ENCODE measurements at regions of chr11 and their contacts with region 1.

Region 1: GRCh38 chr11:58579192-58580129 is 598 bp downstream of the ZFP91 start:
- DNase-seq: peak; percentile 96
- ATAC-seq: peak; percentile 33
- H3K4me3 Mint-ChIP-seq: peak overlapping the region; percentile 89
- H3K27ac Mint-ChIP-seq: peak overlapping the region; percentile 99
- H3K4me1 Mint-ChIP-seq: peaks cover 44% of the 10 kb centered on the region
- H3K27me3 Mint-ChIP-seq: no peaks in the 10 kb centered on the region

Region 2: GRCh38 chr11:57335343-57336110 is 1243.9 kb before region 1 on chr11 and contains the start of gene SSRP1:
- CTCF ChIA-PET with region 1: no interaction called
- POLR2A ChIA-PET with region 1: no interaction called
- intact Hi-C with region 1: loop called in 1 of 2 experiments (anchors 10 kb)
- DNase-seq: peak; percentile 93
- ATAC-seq: peak; percentile 99
- H3K4me3 Mint-ChIP-seq: peak within 1 kb of the TSS; percentile 97
- H3K27ac Mint-ChIP-seq: peak within 1 kb of the TSS; percentile 100
- H3K4me1 Mint-ChIP-seq: peaks cover 43% of the 10 kb centered on the region
- H3K27me3 Mint-ChIP-seq: no peaks in the 10 kb centered on the region
- total RNA-seq, gene SSRP1: 279 to 296 TPM

Region 3: GRCh38 chr11:57657194-57658022 is 922.1 kb before region 1 on chr11 and contains the start of gene CLP1:
- CTCF ChIA-PET with region 1: no interaction called
- POLR2A ChIA-PET with region 1: no interaction called
- intact Hi-C with region 1: loop called (anchors 1 to 2 kb)
- DNase-seq: peak; percentile 100
- ATAC-seq: peak; percentile 98
- H3K4me3 Mint-ChIP-seq: peak within 1 kb of the TSS; percentile 83
- H3K27ac Mint-ChIP-seq: peak within 1 kb of the TSS; percentile 95
- H3K4me1 Mint-ChIP-seq: peaks cover 29% of the 10 kb centered on the region
- H3K27me3 Mint-ChIP-seq: no peaks in the 10 kb centered on the region
- total RNA-seq, gene CLP1: 11.9 to 15.9 TPM

Region 4: GRCh38 chr11:58524232-58525036 is 55.0 kb before region 1 on chr11:
- CTCF ChIA-PET with region 1: interaction called, 45 read pairs
- POLR2A ChIA-PET with region 1: interaction called, 4 read pairs
- intact Hi-C with region 1: loop called in 1 of 2 experiments (anchors 1 kb)
- DNase-seq: peak; percentile 69
- ATAC-seq: peak; percentile 69
- H3K4me3 Mint-ChIP-seq: peak overlapping the region; percentile 47
- H3K27ac Mint-ChIP-seq: peak overlapping the region; percentile 90
- H3K4me1 Mint-ChIP-seq: peaks cover 58% of the 10 kb centered on the region
- H3K27me3 Mint-ChIP-seq: no peaks in the 10 kb centered on the region

Region 5: GRCh38 chr11:58629857-58630256 is 50.4 kb after region 1 on chr11:
- CTCF ChIA-PET with region 1: interaction called, 32 read pairs
- POLR2A ChIA-PET with region 1: no interaction called
- intact Hi-C with region 1: loop called (anchors 2 kb)
- DNase-seq: peak; percentile 38
- ATAC-seq: no peak
- H3K4me3 Mint-ChIP-seq: no peak overlapping the region
- H3K27ac Mint-ChIP-seq: no peak overlapping the region
- H3K4me1 Mint-ChIP-seq: peaks cover 9% of the 10 kb centered on the region
- H3K27me3 Mint-ChIP-seq: no peaks in the 10 kb centered on the region

Region 6: DNA sequence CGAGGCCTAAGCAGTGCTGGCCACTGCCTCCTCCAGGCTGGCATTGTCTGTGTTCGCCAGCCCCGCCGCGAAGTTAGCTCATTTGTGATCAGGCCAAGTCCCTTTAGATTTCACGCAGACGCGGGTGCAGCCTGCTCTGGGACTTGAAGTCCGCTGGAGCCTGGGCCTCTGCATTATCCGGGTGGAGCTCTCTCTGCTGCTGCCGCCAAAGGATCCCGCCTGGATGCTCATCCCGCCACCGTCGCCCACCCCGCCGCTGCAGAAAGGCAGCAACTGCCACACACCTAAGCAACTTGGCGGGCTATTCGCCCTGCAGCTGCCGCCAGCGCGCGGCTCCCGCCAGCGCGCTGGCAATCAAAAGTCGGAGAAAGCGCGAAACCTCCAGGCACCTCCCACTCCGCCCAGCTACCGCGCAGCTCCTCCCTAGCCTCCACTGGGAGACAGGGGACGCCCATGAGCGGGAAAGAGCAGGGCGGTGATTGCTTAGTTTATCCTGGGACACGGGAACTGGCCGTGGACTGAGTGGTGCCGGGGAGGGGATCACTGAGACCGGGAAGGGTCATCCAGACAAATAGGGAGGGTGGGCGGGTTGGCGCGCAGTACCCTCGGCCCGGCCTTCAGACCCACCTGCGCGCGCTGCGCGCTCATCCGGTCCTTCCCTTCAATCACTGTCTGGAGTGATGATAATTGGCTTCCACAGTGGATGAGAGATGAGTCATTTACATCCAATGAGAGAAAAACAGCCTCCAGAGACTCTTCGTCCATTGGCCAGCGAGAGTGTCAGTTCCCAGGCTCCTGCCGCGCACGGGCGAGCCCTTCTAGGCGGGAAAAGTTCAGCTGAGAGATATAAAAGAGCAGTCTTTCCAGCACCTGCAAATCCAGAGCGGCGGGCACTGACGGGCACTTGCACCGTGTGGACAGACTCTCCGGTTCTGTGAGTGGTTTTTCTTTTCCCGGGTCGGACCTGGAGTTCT is 527.2 kb after region 1 on chr11 and contains the start of gene FAM111B:
- CTCF ChIA-PET with region 1: no interaction called
- POLR2A ChIA-PET with region 1: no interaction called
- intact Hi-C with region 1: loop called in 1 of 2 experiments (anchors 2 kb)
- DNase-seq: peak; percentile 86
- ATAC-seq: peak; percentile 87
- H3K4me3 Mint-ChIP-seq: peak within 1 kb of the TSS; percentile 79
- H3K27ac Mint-ChIP-seq: peak within 1 kb of the TSS; percentile 64
- H3K4me1 Mint-ChIP-seq: peaks cover 54% of the 10 kb centered on the region
- H3K27me3 Mint-ChIP-seq: peaks cover 23% of the 10 kb centered on the region
- total RNA-seq, gene FAM111B: 32.3 to 38.9 TPM

Region 7: GRCh38 chr11:59668950-59669610 is 1089.6 kb after region 1 on chr11 and contains the start of gene PATL1:
- CTCF ChIA-PET with region 1: no interaction called
- POLR2A ChIA-PET with region 1: no interaction called
- intact Hi-C with region 1: loop called in 1 of 2 experiments (anchors 2 kb)
- DNase-seq: peak; percentile 99
- ATAC-seq: peak; percentile 93
- H3K4me3 Mint-ChIP-seq: peak within 1 kb of the TSS; percentile 81
- H3K27ac Mint-ChIP-seq: peak within 1 kb of the TSS; percentile 92
- H3K4me1 Mint-ChIP-seq: peaks cover 37% of the 10 kb centered on the region
- H3K27me3 Mint-ChIP-seq: no peaks in the 10 kb centered on the region
- total RNA-seq, gene PATL1: 59.8 to 88.7 TPM

Measured in activated CD4-positive, alpha-beta T cell treated with anti-CD3 and anti-CD28 coated beads for 36 hours (primary cell).